MCF 10A (cell line): ENCODE measurements at regions of chr3 and their contacts with region 1.

Region 1: GRCh38 chr3:4350789-4351163 is 47.6 kb downstream of the SETMAR start:
- DNase-seq: peak; percentile 68
- H3K4me3 Mint-ChIP-seq: no peak overlapping the region
- H3K27ac Mint-ChIP-seq: no peak overlapping the region
- H3K4me1 Mint-ChIP-seq: peaks cover 7% of the 10 kb centered on the region
- H3K27me3 Mint-ChIP-seq: no peaks in the 10 kb centered on the region
- CTCF ChIP-seq: peak; percentile 67

Region 2: DNA sequence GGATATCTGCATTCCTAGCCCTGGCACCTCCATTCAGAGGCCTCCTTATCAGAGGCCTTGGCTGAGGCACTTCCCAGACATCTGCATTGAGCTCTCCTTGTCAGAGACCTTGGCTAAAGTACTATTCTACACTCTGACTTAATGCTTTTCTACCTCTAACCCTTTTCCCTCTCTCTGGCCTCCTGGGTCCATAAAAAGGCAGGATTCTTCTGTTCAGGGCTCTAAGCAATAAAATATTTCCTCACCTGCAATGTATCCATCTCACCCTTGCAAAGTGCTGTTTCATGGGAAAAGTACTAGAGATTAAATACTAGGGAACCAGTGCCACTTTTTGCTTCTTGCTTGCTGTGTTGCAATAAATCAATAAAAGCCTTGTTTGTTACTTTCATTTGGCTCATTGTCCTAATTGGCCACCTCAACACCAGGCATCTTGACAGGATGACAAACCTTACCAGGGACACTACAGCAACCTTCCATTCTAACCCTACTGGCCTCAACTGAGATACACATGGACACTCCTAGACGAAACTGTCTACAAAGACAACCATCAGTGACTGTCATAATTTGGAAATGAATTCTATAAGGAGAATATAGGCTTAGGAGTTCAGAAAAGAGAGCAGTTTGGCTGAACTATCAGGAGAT is 154.1 kb before region 1 on chr3:
- CTCF ChIA-PET with region 1: no interaction called
- POLR2A ChIA-PET with region 1: no interaction called
- intact Hi-C with region 1: no loop called
- DNase-seq: no peak
- H3K4me3 Mint-ChIP-seq: no peak overlapping the region
- H3K27ac Mint-ChIP-seq: no peak overlapping the region
- H3K4me1 Mint-ChIP-seq: no peaks in the 10 kb centered on the region
- H3K27me3 Mint-ChIP-seq: no peaks in the 10 kb centered on the region
- CTCF ChIP-seq: no peak

Region 3: DNA sequence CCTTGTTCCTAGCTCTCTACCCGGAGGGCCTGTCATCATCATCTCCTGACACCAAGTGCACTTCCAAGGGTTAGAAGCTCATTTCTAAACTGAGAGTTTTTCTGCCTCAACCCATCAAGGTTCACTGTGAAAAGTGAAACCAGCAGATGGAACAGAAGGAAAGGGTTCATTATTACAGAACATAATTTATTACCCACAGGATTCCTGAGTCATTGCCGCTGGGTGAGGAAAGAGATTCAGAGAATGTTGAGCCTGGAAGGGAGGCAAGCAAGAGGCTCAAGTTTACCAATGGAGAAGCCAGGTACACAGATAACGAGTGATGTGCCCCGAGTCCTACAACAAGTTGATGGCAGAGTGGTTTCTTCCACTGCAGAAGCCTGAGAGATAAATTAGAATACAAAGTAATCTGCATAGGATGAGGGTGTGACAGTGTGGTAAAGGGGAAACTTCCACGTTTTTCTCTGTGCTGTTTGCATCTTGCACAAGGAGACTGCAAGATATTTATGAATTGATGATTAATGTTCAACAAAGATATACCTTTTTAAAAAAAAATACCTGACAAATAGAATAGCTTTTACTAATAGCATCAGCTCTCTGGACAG is 128.1 kb before region 1 on chr3:
- CTCF ChIA-PET with region 1: no interaction called
- POLR2A ChIA-PET with region 1: no interaction called
- intact Hi-C with region 1: no loop called
- DNase-seq: no peak
- H3K4me3 Mint-ChIP-seq: no peak overlapping the region
- H3K27ac Mint-ChIP-seq: no peak overlapping the region
- H3K4me1 Mint-ChIP-seq: no peaks in the 10 kb centered on the region
- H3K27me3 Mint-ChIP-seq: no peaks in the 10 kb centered on the region
- CTCF ChIP-seq: no peak

Region 4: GRCh38 chr3:4303187-4304123 is 47.3 kb before region 1 on chr3 and contains the start of gene SETMAR:
- CTCF ChIA-PET with region 1: interaction called, 10 read pairs
- POLR2A ChIA-PET with region 1: no interaction called
- intact Hi-C with region 1: no loop called
- DNase-seq: peak; percentile 90
- H3K4me3 Mint-ChIP-seq: peak within 1 kb of the TSS; percentile 91
- H3K27ac Mint-ChIP-seq: peak within 1 kb of the TSS; percentile 88
- H3K4me1 Mint-ChIP-seq: peaks cover 10% of the 10 kb centered on the region
- H3K27me3 Mint-ChIP-seq: no peaks in the 10 kb centered on the region
- CTCF ChIP-seq: no peak
- total RNA-seq, gene SETMAR: 5.1 and 8.3 TPM in 2 replicates

Region 5: GRCh38 chr3:4340411-4341335 is 10.1 kb before region 1 on chr3:
- CTCF ChIA-PET with region 1: interaction called, 17 read pairs
- POLR2A ChIA-PET with region 1: interaction called, 5 read pairs
- intact Hi-C with region 1: no loop called
- DNase-seq: no peak
- H3K4me3 Mint-ChIP-seq: no peak overlapping the region
- H3K27ac Mint-ChIP-seq: no peak overlapping the region
- H3K4me1 Mint-ChIP-seq: no peaks in the 10 kb centered on the region
- H3K27me3 Mint-ChIP-seq: no peaks in the 10 kb centered on the region
- CTCF ChIP-seq: no peak

Region 6: DNA sequence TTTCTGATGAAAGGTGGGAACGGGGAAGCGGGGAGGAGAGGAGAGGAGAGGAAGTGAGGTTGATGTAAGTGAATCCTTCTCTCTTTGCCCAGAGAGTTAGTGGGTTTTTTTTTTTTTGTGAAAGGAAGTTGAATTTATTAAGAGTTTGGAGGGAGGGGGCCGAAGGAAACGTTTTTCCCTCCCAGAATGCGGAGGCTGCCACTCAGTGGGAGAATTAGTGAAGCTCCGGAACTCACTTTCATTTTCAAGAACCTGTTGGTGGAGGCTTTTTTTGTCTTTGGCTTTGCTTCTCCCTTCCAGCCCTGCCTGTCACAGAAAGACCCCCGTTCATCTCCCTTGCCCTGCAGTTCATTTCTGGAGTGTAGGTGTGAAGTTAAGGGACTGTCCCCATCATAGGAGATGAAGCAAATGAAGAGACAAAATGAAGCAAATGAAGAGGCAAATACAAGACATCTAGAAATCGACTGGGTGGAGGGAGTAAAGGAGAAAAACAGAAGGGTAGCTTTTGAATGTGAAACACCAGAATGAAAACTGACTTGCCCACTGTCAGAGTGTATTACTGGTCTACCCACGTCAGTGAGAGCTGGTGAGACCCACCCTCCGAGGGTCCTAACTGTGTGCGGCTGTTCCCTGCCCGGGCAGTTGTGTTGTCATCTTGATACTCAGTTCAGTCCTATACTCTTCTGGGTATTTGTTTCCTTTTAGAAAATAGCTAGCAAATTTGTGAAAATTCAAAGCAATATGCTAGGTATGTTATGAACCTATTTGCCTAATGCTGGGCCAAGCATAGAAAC is 233.9 kb after region 1 on chr3:
- CTCF ChIA-PET with region 1: interaction called, 3 read pairs
- POLR2A ChIA-PET with region 1: no interaction called
- intact Hi-C with region 1: loop called (anchors 1 kb)
- DNase-seq: no peak
- H3K4me3 Mint-ChIP-seq: peak overlapping the region; percentile 60
- H3K27ac Mint-ChIP-seq: peak overlapping the region; percentile 89
- H3K4me1 Mint-ChIP-seq: peaks cover 38% of the 10 kb centered on the region
- H3K27me3 Mint-ChIP-seq: no peaks in the 10 kb centered on the region
- CTCF ChIP-seq: no peak

Region 7: GRCh38 chr3:4644951-4645350 is 294.2 kb after region 1 on chr3:
- CTCF ChIA-PET with region 1: interaction called, 11 read pairs
- POLR2A ChIA-PET with region 1: no interaction called
- intact Hi-C with region 1: no loop called
- DNase-seq: no peak
- H3K4me3 Mint-ChIP-seq: no peak overlapping the region
- H3K27ac Mint-ChIP-seq: no peak overlapping the region
- H3K4me1 Mint-ChIP-seq: no peaks in the 10 kb centered on the region
- H3K27me3 Mint-ChIP-seq: no peaks in the 10 kb centered on the region
- CTCF ChIP-seq: no peak

Region 8: GRCh38 chr3:5226783-5227182 is 876.0 kb after region 1 on chr3:
- CTCF ChIA-PET with region 1: no interaction called
- POLR2A ChIA-PET with region 1: no interaction called
- intact Hi-C with region 1: no loop called
- DNase-seq: peak; percentile 13
- H3K4me3 Mint-ChIP-seq: no peak overlapping the region
- H3K27ac Mint-ChIP-seq: no peak overlapping the region
- H3K4me1 Mint-ChIP-seq: no peaks in the 10 kb centered on the region
- H3K27me3 Mint-ChIP-seq: no peaks in the 10 kb centered on the region
- CTCF ChIP-seq: no peak